Activated naive CD4-positive, alpha-beta T cell treated with anti-CD3 and anti-CD28 coated beads, Interleukin-2, amount 10 ng/mL, durations not matched to agents 7 days and 5 days (primary cell): ENCODE measurements at regions of chr17 and their contacts with region 1.

Region 1: GRCh38 chr17:18217412-18218015 is 7.9 kb upstream of the LLGL1 start:
- DNase-seq: peak; percentile 83
- H3K4me3 Mint-ChIP-seq: no peak overlapping the region
- H3K27ac Mint-ChIP-seq: no peak overlapping the region
- H3K4me1 Mint-ChIP-seq: no peaks in the 10 kb centered on the region
- H3K27me3 Mint-ChIP-seq: no peaks in the 10 kb centered on the region

Region 2: GRCh38 chr17:18205861-18206260 is 11.7 kb before region 1 on chr17:
- CTCF ChIA-PET with region 1: interaction called, 21 read pairs
- DNase-seq: no peak
- H3K4me3 Mint-ChIP-seq: no peak overlapping the region
- H3K27ac Mint-ChIP-seq: no peak overlapping the region
- H3K4me1 Mint-ChIP-seq: no peaks in the 10 kb centered on the region
- H3K27me3 Mint-ChIP-seq: no peaks in the 10 kb centered on the region